H1 (cell line): ENCODE measurements at regions of chr6 and their contacts with region 1.

Region 1: GRCh38 chr6:658244-658643 is 1.3 kb upstream of the HUS1B start:
- DNase-seq: no peak
- H3K4me3 ChIP-seq: no peak overlapping the region
- H3K27ac ChIP-seq: no peak overlapping the region
- H3K4me1 ChIP-seq: peaks cover 6 to 32% (median 13%) of the 10 kb centered on the region in 4 experiments
- H3K27me3 ChIP-seq: no peaks in the 10 kb centered on the region
- CTCF ChIP-seq: no peak
- EP300 ChIP-seq: no peak
- POLR2A ChIP-seq: no peak
- RAD21 ChIP-seq: no peak

Region 2: GRCh38 chr6:356828-357251 is 301.4 kb before region 1 on chr6:
- CTCF ChIA-PET with region 1: no interaction called
- POLR2A ChIA-PET with region 1: no interaction called
- DNase-seq: no peak
- H3K4me3 ChIP-seq: no peak overlapping the region
- H3K27ac ChIP-seq: no peak overlapping the region
- H3K4me1 ChIP-seq: no peaks in the 10 kb centered on the region; a peak in 2 of 7 replicates
- H3K27me3 ChIP-seq: no peaks in the 10 kb centered on the region; a peak in 1 of 7 replicates
- CTCF ChIP-seq: no peak
- EP300 ChIP-seq: no peak
- POLR2A ChIP-seq: no peak
- RAD21 ChIP-seq: no peak

Region 3: GRCh38 chr6:593139-593906 is 64.9 kb before region 1 on chr6:
- CTCF ChIA-PET with region 1: interaction called, 14 read pairs
- POLR2A ChIA-PET with region 1: no interaction called
- DNase-seq: no peak
- H3K4me3 ChIP-seq: no peak overlapping the region
- H3K27ac ChIP-seq: 0 out of 2 replicates have a peak overlapping the region, but pooled peaks have one; percentile 25
- H3K4me1 ChIP-seq: peaks cover 0 to 6% (median 3%) of the 10 kb centered on the region in 4 experiments; a peak in 6 of 7 replicates
- H3K27me3 ChIP-seq: no peaks in the 10 kb centered on the region
- CTCF ChIP-seq: peak in 2 of 3 experiments; percentile 39 to 55; a peak in 3 of 4 replicates
- EP300 ChIP-seq: no peak
- POLR2A ChIP-seq: no peak
- RAD21 ChIP-seq: peak; percentile 76 to 78

Region 4: GRCh38 chr6:604579-604978 is 53.7 kb before region 1 on chr6:
- CTCF ChIA-PET with region 1: no interaction called
- POLR2A ChIA-PET with region 1: no interaction called
- DNase-seq: no peak
- H3K4me3 ChIP-seq: no peak overlapping the region
- H3K27ac ChIP-seq: no peak overlapping the region
- H3K4me1 ChIP-seq: no peaks in the 10 kb centered on the region
- H3K27me3 ChIP-seq: no peaks in the 10 kb centered on the region
- CTCF ChIP-seq: no peak
- EP300 ChIP-seq: no peak
- POLR2A ChIP-seq: no peak
- RAD21 ChIP-seq: no peak

Region 5: DNA sequence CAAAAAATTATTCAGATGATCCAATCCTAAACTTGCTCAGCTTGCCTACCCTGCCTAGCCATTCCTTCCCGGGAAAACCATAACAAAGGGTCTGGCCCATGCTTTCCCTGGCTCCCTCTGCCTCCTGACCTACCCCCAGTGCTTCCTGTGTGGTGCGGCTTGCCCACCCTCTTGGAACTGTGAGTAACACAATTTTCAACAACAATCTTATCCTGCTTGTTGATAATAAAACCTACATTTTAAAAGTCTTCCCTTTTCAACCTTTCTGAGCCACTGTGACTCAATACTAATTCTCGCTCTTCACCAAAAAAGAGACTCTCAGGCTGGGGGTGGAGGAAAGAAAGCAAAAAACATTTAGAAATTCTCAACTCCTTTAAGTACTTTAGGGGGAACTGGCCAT is 16.7 kb after region 1 on chr6:
- CTCF ChIA-PET with region 1: interaction called, 24 read pairs
- POLR2A ChIA-PET with region 1: interaction called, 12 read pairs
- DNase-seq: no peak
- H3K4me3 ChIP-seq: no peak overlapping the region
- H3K27ac ChIP-seq: no peak overlapping the region; the same call in 1 of the 2 replicates
- H3K4me1 ChIP-seq: peaks cover 5 to 19% (median 12%) of the 10 kb centered on the region in 4 experiments
- H3K27me3 ChIP-seq: no peaks in the 10 kb centered on the region
- CTCF ChIP-seq: no peak
- EP300 ChIP-seq: no peak
- POLR2A ChIP-seq: no peak
- RAD21 ChIP-seq: no peak

Region 6: DNA sequence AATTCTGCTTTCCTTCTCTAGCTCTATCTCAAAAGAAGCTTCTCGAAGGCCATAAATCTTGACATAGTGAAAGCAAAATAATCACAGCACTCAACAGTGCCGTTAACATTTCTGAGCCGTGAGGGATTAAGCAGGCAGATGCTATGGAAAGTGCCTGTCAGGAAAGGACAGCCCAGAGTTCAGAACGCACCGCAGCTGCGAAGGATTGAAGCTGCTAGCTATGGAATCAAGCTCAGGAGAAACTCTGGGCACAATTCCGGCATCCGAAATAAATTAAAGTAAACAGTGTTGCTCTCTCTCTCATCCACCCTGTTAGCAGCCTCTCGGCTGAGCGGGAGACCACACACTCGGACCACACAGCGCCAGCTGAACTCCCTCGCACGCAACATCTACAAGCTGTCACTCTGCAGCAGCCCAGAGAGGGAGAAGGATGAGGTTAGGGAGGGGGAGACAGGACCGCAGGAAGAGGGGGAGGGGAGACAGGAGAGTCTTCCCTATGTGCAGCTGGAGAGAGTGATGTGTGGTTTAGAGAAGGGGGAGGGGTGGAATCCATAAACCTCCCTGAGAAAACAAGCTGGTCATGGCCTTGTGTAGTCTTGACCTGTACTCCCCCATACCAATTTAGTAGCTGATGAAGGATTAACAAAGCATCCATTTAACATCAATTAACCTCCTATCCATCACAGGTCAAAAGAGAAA is 25.6 kb after region 1 on chr6:
- CTCF ChIA-PET with region 1: interaction called, 15 read pairs
- POLR2A ChIA-PET with region 1: interaction called, 12 read pairs
- DNase-seq: peak; percentile 63 to 95
- H3K4me3 ChIP-seq: peak overlapping the region; percentile 4 to 50 (median 44); a peak in 5 of 8 replicates
- H3K27ac ChIP-seq: peak overlapping the region; percentile 43; the same call in 1 of the 2 replicates
- H3K4me1 ChIP-seq: peaks cover 10 to 40% (median 27%) of the 10 kb centered on the region in 4 experiments
- H3K27me3 ChIP-seq: no peaks in the 10 kb centered on the region
- CTCF ChIP-seq: no peak
- EP300 ChIP-seq: peak in 1 of 2 experiments; percentile 88; a peak in 1 of 3 replicates
- POLR2A ChIP-seq: no peak; a peak in 1 of 3 replicates
- RAD21 ChIP-seq: peak in 1 of 2 experiments; percentile 3; a peak in 1 of 4 replicates

Region 7: DNA sequence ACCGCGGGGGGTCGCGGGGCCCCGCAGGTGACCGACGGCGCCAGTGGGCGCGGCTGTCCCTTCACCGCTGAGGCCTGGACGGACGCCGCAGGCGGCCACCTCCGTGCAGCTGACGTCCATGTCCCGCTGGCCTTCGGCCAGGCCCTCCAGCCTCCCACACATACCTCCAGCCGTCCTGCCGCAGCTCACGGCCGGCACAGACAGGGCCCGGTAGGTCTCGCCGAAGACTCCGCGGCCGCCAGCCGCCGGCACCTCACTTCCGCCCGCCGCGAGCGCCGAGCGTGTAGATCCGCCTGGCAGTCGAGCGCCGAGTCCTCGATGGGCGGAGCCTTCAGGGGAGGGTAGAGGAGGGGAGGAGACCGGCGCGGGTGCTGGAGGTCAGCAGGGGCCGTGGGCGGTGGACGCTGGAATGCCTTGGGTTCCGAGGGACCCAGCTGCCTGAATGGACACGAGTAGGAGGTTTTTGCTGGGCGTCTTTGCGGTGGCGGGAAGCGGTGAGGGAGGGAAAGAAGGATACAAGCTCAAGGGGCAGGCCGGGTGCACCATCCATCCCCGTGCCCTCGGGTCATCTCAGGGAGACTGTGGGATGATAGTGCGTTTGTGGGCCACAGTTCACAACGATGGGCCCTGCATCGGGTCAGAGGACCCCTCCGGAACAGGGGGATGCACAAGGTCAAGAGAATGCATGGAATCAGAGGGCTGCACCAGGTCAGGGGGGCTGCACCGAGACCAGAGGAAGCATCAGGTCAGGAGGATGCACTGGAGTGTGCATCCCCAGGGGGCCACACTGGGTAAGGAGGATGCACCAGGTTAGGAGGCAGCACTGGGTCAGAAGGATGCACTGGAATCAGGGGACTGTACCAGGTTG is 34.8 kb after region 1 on chr6 and contains the start of gene EXOC2:
- CTCF ChIA-PET with region 1: interaction called, 10 read pairs
- POLR2A ChIA-PET with region 1: no interaction called
- DNase-seq: peak; percentile 54 to 92
- H3K4me3 ChIP-seq: peak within 1 kb of the TSS; percentile 71 to 93 (median 88)
- H3K27ac ChIP-seq: peak within 1 kb of the TSS; percentile 56; the same call in 1 of the 2 replicates
- H3K4me1 ChIP-seq: peaks cover 0 to 4% (median 1%) of the 10 kb centered on the region in 4 experiments; a peak in 4 of 7 replicates
- H3K27me3 ChIP-seq: no peaks in the 10 kb centered on the region
- CTCF ChIP-seq: peak; percentile 84 to 99 (median 85)
- EP300 ChIP-seq: peak in 1 of 2 experiments; percentile 91; a peak in 1 of 3 replicates
- POLR2A ChIP-seq: peak in 1 of 2 experiments; percentile 40; a peak in 1 of 3 replicates
- RAD21 ChIP-seq: peak; percentile 49 to 63
- total RNA-seq, gene EXOC2: 44.2 and 44.4 TPM in 2 replicates

Region 8: DNA sequence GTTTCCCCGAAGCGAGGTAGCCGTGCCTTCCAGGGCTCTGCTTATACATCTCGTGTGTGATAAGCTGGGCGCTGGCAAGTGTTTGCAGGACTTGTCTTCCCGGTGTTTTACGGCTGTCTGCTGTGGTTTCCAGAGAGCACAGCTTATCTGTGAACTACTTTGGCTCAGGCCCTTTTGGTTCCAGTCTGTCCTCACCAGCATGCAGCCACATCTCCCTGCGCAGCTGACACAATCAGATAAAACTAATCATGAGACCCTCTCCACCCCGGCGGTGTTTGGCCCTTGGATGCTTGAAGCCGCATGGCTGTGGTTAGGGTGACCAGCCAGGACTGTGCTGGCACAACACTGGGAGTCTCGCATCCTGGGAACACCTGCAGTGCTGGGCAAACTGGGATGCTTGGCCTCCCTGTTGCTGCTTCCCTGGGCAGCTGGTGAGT is 411.9 kb after region 1 on chr6:
- CTCF ChIA-PET with region 1: no interaction called
- POLR2A ChIA-PET with region 1: no interaction called
- DNase-seq: no peak
- H3K4me3 ChIP-seq: no peak overlapping the region
- H3K27ac ChIP-seq: no peak overlapping the region
- H3K4me1 ChIP-seq: no peaks in the 10 kb centered on the region
- H3K27me3 ChIP-seq: no peaks in the 10 kb centered on the region
- CTCF ChIP-seq: no peak
- EP300 ChIP-seq: no peak
- POLR2A ChIP-seq: no peak
- RAD21 ChIP-seq: no peak